ENCODE measurements at regions of chr4 and their contacts with region 1.

Region 1: GRCh38 chr4:5758741-5759140 is 47.7 kb downstream of the EVC start:
- DNase-seq: peak; percentile 67
- H3K4me3 Mint-ChIP-seq: peak overlapping the region; percentile 7
- H3K27ac Mint-ChIP-seq: peak overlapping the region; percentile 54
- H3K4me1 Mint-ChIP-seq: peaks cover 5% of the 10 kb centered on the region
- H3K27me3 Mint-ChIP-seq: no peaks in the 10 kb centered on the region

Region 2: DNA sequence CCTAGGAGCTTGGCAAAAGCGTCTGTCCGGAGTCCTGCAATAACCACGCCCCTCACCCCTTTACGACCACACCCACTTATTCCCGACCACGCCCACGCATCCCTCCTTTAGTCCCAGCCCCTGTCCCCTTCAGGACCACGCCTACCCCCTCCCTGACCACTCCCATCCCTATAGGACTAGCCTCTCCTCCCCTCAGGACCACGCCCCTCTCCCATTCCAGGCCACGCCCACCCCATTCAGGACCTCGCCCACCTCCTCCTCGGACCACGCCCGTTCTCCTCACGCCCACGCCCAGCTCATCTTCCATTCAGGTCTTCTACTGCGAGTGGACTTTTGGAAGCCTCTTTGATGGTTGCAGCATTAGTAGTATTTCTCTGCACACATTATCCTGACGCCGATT is 1085.7 kb before region 1 on chr4:
- intact Hi-C with region 1: no loop called
- DNase-seq: no peak
- H3K4me3 Mint-ChIP-seq: no peak overlapping the region
- H3K27ac Mint-ChIP-seq: no peak overlapping the region
- H3K4me1 Mint-ChIP-seq: no peaks in the 10 kb centered on the region
- H3K27me3 Mint-ChIP-seq: no peaks in the 10 kb centered on the region

Region 3: DNA sequence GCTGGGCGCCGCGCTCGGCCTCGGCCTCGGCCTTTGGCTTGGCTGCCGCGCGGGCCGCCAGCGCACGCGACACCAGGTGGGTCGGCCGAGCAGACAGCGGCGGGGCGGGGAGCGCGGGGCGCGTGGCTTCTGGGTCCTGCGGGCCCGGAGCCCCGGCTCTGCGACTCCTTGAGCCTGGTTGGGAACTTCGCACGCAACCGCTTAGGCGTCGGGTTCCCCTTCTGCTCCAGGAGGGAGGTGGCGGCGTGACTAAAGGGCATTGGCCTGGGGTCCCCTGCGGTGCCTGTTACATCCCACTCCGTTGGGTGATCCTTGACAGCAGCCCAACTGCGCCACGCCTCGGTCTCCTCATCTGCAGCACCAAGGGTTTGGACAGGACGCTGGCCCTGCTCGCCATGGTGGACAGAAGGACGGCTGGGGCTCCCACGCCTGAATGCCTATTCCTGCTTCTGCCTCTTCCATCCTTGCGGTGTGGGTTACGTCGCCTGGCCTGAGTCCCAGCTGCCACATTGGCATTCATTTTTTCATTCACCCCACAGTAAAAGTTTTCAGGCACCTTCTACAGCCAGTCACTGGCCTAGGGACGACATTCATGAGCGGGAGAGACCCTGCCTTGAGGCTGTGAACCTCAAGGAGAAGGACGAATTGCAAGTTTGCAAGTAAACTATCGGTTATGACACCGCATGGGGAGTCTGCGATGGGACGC is 47.1 kb before region 1 on chr4:
- intact Hi-C with region 1: loop called (anchors 2 kb)
- DNase-seq: peak; percentile 50
- H3K4me3 Mint-ChIP-seq: peak overlapping the region; percentile 39
- H3K27ac Mint-ChIP-seq: no peak overlapping the region
- H3K4me1 Mint-ChIP-seq: peaks cover 6% of the 10 kb centered on the region
- H3K27me3 Mint-ChIP-seq: peaks cover 39% of the 10 kb centered on the region